BJ (cell line): ENCODE measurements at regions of chr3 and their contacts with region 1.

Region 1: GRCh38 chr3:184250167-184250828 is 826 bp downstream of the EEF1AKMT4 start:
- DNase-seq: peak; percentile 39
- H3K4me3 ChIP-seq: peak overlapping the region; percentile 98
- H3K27me3 ChIP-seq: no peaks in the 10 kb centered on the region
- CTCF ChIP-seq: peak; percentile 97

Region 2: GRCh38 chr3:183895296-183895695 is 355.0 kb before region 1 on chr3:
- CTCF ChIA-PET with region 1: interaction called, 16 read pairs
- POLR2A ChIA-PET with region 1: no interaction called
- DNase-seq: no peak
- H3K4me3 ChIP-seq: no peak overlapping the region
- H3K27me3 ChIP-seq: peaks cover 3% of the 10 kb centered on the region; the same call in 1 of the 2 replicates
- CTCF ChIP-seq: peak; percentile 84